H1 (cell line): ENCODE measurements at regions of chr2 and their contacts with region 1.

Region 1: GRCh38 chr2:172427256-172427989 is at the start of gene ITGA6:
- DNase-seq: peak in 1 of 2 experiments; percentile 82
- H3K4me3 ChIP-seq: peak within 1 kb of the TSS; percentile 78 to 88 (median 84)
- H3K27ac ChIP-seq: peak within 1 kb of the TSS; percentile 70
- H3K4me1 ChIP-seq: peaks cover 4 to 24% (median 11%) of the 10 kb centered on the region in 4 experiments; a peak in 5 of 7 replicates
- H3K27me3 ChIP-seq: peaks cover 0 to 3% (median 1%) of the 10 kb centered on the region in 4 experiments; a peak in 3 of 7 replicates
- CTCF ChIP-seq: peak in 1 of 3 experiments; percentile 32; a peak in 2 of 4 replicates
- EP300 ChIP-seq: no peak
- POLR2A ChIP-seq: peak; percentile 60 to 83
- RAD21 ChIP-seq: peak; percentile 6 to 27; a peak in 2 of 4 replicates
- total RNA-seq, gene ITGA6: 117 and 118 TPM in 2 replicates

Region 2: GRCh38 chr2:172307800-172308199 is 119.6 kb before region 1 on chr2:
- CTCF ChIA-PET with region 1: no interaction called
- POLR2A ChIA-PET with region 1: no interaction called
- DNase-seq: no peak
- H3K4me3 ChIP-seq: no peak overlapping the region
- H3K27ac ChIP-seq: no peak overlapping the region
- H3K4me1 ChIP-seq: no peaks in the 10 kb centered on the region
- H3K27me3 ChIP-seq: no peaks in the 10 kb centered on the region; a peak in 1 of 7 replicates
- CTCF ChIP-seq: no peak
- EP300 ChIP-seq: no peak
- POLR2A ChIP-seq: no peak
- RAD21 ChIP-seq: no peak

Region 3: DNA sequence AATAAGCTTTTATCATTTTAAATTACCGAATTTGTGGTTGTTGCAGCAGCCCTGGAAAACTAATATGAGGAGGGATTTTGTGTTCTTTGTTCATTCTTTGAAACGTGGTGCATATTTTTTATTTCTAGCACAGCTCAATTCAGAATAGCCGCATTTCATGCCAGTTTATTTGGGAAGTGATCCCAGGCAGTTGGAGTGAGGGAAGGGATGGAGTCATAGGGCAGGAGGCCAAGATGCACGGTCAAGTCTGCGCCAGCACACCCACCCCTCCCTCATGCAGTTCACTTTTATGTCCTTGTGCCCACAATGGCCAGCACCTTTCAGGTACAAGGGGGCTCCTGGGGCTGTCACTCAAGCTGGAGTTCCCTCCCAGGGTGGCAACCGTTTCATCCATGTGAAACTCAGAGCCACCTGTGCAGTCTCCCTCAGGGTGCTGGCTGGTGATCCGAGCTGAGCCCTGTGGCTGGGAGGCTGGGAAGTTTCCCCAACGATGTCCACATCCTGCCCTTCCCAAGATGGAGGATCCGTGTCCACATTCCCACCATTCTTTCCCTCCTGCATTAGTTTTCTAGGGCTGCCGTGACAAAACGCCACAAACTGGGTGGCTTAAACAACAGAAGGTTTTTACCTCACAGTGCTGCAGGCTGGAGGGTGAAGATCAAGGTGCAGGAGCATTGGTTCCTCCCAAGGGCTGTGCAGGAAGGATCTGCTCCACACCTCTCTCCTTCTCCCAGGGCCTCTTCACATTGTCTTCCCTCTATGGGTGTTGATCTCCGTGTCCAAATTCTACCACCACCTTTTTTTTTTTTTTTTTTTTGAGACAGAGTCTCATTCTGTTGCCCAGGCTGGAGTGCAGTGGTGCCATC is 68.5 kb before region 1 on chr2:
- CTCF ChIA-PET with region 1: no interaction called
- POLR2A ChIA-PET with region 1: no interaction called
- DNase-seq: no peak
- H3K4me3 ChIP-seq: no peak overlapping the region
- H3K27ac ChIP-seq: no peak overlapping the region
- H3K4me1 ChIP-seq: no peaks in the 10 kb centered on the region
- H3K27me3 ChIP-seq: no peaks in the 10 kb centered on the region
- CTCF ChIP-seq: no peak
- EP300 ChIP-seq: no peak
- POLR2A ChIP-seq: no peak
- RAD21 ChIP-seq: no peak

Region 4: GRCh38 chr2:172442072-172442895 is 14.9 kb after region 1 on chr2:
- CTCF ChIA-PET with region 1: interaction called, 634 read pairs
- POLR2A ChIA-PET with region 1: interaction called, 33 read pairs
- DNase-seq: no peak
- H3K4me3 ChIP-seq: peak overlapping the region in 1 of 4 experiments; percentile 1; a peak in 1 of 8 replicates
- H3K27ac ChIP-seq: no peak overlapping the region
- H3K4me1 ChIP-seq: peaks cover 2 to 37% (median 18%) of the 10 kb centered on the region in 4 experiments
- H3K27me3 ChIP-seq: no peaks in the 10 kb centered on the region
- CTCF ChIP-seq: no peak
- EP300 ChIP-seq: no peak
- POLR2A ChIP-seq: no peak
- RAD21 ChIP-seq: no peak

Region 5: GRCh38 chr2:172480301-172481218 is 53.1 kb after region 1 on chr2:
- CTCF ChIA-PET with region 1: no interaction called
- POLR2A ChIA-PET with region 1: no interaction called
- DNase-seq: no peak
- H3K4me3 ChIP-seq: no peak overlapping the region
- H3K27ac ChIP-seq: no peak overlapping the region
- H3K4me1 ChIP-seq: 0 out of 7 replicates have a peak, but pooled peaks cover 0 to 1% (median 0%) of the 10 kb centered on the region in 4 experiments
- H3K27me3 ChIP-seq: no peaks in the 10 kb centered on the region
- CTCF ChIP-seq: no peak
- EP300 ChIP-seq: no peak
- POLR2A ChIP-seq: no peak
- RAD21 ChIP-seq: no peak